GM13976 (cell line): ENCODE measurements at regions of chr2 and their contacts with region 1.

Region 1: GRCh38 chr2:219160186-219161017 is at the start of gene NHEJ1:
- DNase-seq: peak; percentile 98
- CTCF ChIP-seq: peak; percentile 92

Region 2: GRCh38 chr2:218964041-218964770 is 196.2 kb before region 1 on chr2:
- in situ Hi-C with region 1: no loop called
- DNase-seq: no peak
- CTCF ChIP-seq: no peak

Region 3: GRCh38 chr2:219294356-219295351 is 134.3 kb after region 1 on chr2:
- in situ Hi-C with region 1: loop called (anchors 25 kb)
- DNase-seq: peak; percentile 99
- CTCF ChIP-seq: peak; percentile 100